ENCODE measurements at regions of chr1 and their contacts with region 1.

Region 1: GRCh38 chr1:207499573-207499972 is 3.6 kb downstream of the CR1 start:
- DNase-seq: peak; percentile 87
- ATAC-seq: peak; percentile 60
- H3K4me3 ChIP-seq: no peak overlapping the region
- H3K4me3 Mint-ChIP-seq: no peak overlapping the region
- H3K27ac ChIP-seq: no peak overlapping the region
- H3K27ac Mint-ChIP-seq: peak overlapping the region; percentile 60
- H3K4me1 ChIP-seq: peaks cover 26 to 31% of the 10 kb centered on the region in 2 donors
- H3K4me1 Mint-ChIP-seq: peaks cover 42% of the 10 kb centered on the region
- H3K27me3 ChIP-seq: no peaks in the 10 kb centered on the region
- H3K27me3 Mint-ChIP-seq: no peaks in the 10 kb centered on the region
- CTCF ChIP-seq: peak; percentile 96

Region 2: GRCh38 chr1:206925106-206925736 is 574.4 kb before region 1 on chr1:
- CTCF ChIA-PET with region 1: interaction called, 4 read pairs
- POLR2A ChIA-PET with region 1: no interaction called
- intact Hi-C with region 1: loop called (anchors 5 kb)
- DNase-seq: peak; percentile 84
- ATAC-seq: peak; percentile 53
- H3K4me3 ChIP-seq: peak overlapping the region in 1 of 5 experiments; percentile 17
- H3K4me3 Mint-ChIP-seq: no peak overlapping the region
- H3K27ac ChIP-seq: peak overlapping the region; percentile 88 to 96
- H3K27ac Mint-ChIP-seq: no peak overlapping the region
- H3K4me1 ChIP-seq: peaks cover 82 to 84% of the 10 kb centered on the region in 2 donors
- H3K4me1 Mint-ChIP-seq: peaks cover 37% of the 10 kb centered on the region
- H3K27me3 ChIP-seq: no peaks in the 10 kb centered on the region
- H3K27me3 Mint-ChIP-seq: no peaks in the 10 kb centered on the region
- CTCF ChIP-seq: peak; percentile 19

Region 3: DNA sequence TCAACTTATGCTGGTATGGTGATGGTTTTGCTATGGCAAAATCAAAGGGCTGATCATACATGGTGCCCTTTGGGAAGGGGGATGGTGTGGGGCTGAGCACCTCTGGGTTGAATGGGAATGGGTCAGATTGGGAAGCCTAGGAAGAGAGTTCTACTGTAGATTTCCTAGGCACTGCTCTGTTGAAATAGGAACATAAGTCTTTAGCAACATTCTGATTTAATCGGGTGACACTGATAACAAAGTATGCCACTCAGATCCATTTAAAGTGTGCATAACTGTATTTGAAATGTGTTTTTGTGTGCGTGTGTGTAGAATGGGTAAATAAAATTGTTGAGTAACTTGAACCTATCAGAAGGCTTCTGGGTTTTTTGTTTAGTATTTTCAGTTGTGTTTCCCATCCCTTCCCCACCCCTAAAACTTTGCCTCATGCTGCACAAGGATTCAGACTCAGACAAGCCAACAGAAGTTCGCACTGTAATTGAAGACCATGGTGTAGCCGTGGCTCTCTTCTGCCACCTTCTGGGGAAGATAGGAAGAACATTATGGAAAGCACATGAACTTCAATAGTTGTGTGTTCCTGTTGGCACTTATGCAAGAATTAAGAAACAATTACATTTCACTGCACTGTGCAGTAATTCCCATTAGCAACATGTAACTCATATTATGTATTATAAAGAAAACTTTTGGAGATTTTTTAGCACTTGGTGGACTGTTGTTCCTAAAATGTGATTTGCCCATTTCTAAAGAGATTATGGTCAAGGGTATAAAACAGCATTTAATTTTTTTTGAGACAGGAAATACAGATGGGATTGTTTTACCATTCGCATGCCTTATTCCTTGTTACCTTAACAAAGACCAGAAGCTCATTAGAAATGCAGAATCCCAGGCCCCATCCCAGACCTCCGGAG is 421.8 kb before region 1 on chr1:
- CTCF ChIA-PET with region 1: interaction called, 209 read pairs
- POLR2A ChIA-PET with region 1: no interaction called
- intact Hi-C with region 1: loop called (anchors 1 kb)
- DNase-seq: peak; percentile 83
- ATAC-seq: peak; percentile 95
- H3K4me3 ChIP-seq: no peak overlapping the region
- H3K4me3 Mint-ChIP-seq: no peak overlapping the region
- H3K27ac ChIP-seq: no peak overlapping the region
- H3K27ac Mint-ChIP-seq: no peak overlapping the region
- H3K4me1 ChIP-seq: no peaks in the 10 kb centered on the region
- H3K4me1 Mint-ChIP-seq: peaks cover 1% of the 10 kb centered on the region
- H3K27me3 ChIP-seq: no peaks in the 10 kb centered on the region
- H3K27me3 Mint-ChIP-seq: no peaks in the 10 kb centered on the region
- CTCF ChIP-seq: peak; percentile 96

Region 4: GRCh38 chr1:207321079-207321789 is 178.3 kb before region 1 on chr1 and contains the start of gene CD55:
- CTCF ChIA-PET with region 1: interaction called, 18 read pairs
- POLR2A ChIA-PET with region 1: interaction called, 8 read pairs
- intact Hi-C with region 1: loop called (anchors 5 kb)
- DNase-seq: peak; percentile 100
- ATAC-seq: peak; percentile 86
- H3K4me3 ChIP-seq: peak within 1 kb of the TSS; percentile 83 to 100 (median 91)
- H3K4me3 Mint-ChIP-seq: peak within 1 kb of the TSS; percentile 98
- H3K27ac ChIP-seq: peak within 1 kb of the TSS; percentile 98
- H3K27ac Mint-ChIP-seq: peak within 1 kb of the TSS; percentile 100
- H3K4me1 ChIP-seq: peaks cover 38 to 43% of the 10 kb centered on the region in 2 donors
- H3K4me1 Mint-ChIP-seq: peaks cover 56% of the 10 kb centered on the region
- H3K27me3 ChIP-seq: no peaks in the 10 kb centered on the region
- H3K27me3 Mint-ChIP-seq: no peaks in the 10 kb centered on the region
- CTCF ChIP-seq: peak; percentile 43
- total RNA-seq, gene CD55: 239 and 252 TPM in 2 replicates

Region 5: GRCh38 chr1:207393610-207394009 is 106.0 kb before region 1 on chr1:
- CTCF ChIA-PET with region 1: no interaction called
- POLR2A ChIA-PET with region 1: no interaction called
- intact Hi-C with region 1: no loop called
- DNase-seq: no peak
- ATAC-seq: no peak
- H3K4me3 ChIP-seq: no peak overlapping the region
- H3K4me3 Mint-ChIP-seq: no peak overlapping the region
- H3K27ac ChIP-seq: no peak overlapping the region
- H3K27ac Mint-ChIP-seq: no peak overlapping the region
- H3K4me1 ChIP-seq: no peaks in the 10 kb centered on the region
- H3K4me1 Mint-ChIP-seq: peaks cover 7% of the 10 kb centered on the region
- H3K27me3 ChIP-seq: no peaks in the 10 kb centered on the region
- H3K27me3 Mint-ChIP-seq: no peaks in the 10 kb centered on the region
- CTCF ChIP-seq: no peak

Region 6: GRCh38 chr1:207414606-207415108 is 84.9 kb before region 1 on chr1:
- CTCF ChIA-PET with region 1: interaction called, 31 read pairs
- POLR2A ChIA-PET with region 1: interaction called, 6 read pairs
- intact Hi-C with region 1: loop called (anchors 2 kb)
- DNase-seq: peak; percentile 84
- ATAC-seq: peak; percentile 90
- H3K4me3 ChIP-seq: peak overlapping the region in 4 of 5 experiments; percentile 28 to 39 (median 34)
- H3K4me3 Mint-ChIP-seq: peak overlapping the region; percentile 75
- H3K27ac ChIP-seq: peak overlapping the region; percentile 67 to 93
- H3K27ac Mint-ChIP-seq: peak overlapping the region; percentile 80
- H3K4me1 ChIP-seq: peaks cover 80 to 83% of the 10 kb centered on the region in 2 donors
- H3K4me1 Mint-ChIP-seq: peaks cover 77% of the 10 kb centered on the region
- H3K27me3 ChIP-seq: no peaks in the 10 kb centered on the region
- H3K27me3 Mint-ChIP-seq: no peaks in the 10 kb centered on the region
- CTCF ChIP-seq: no peak

Region 7: DNA sequence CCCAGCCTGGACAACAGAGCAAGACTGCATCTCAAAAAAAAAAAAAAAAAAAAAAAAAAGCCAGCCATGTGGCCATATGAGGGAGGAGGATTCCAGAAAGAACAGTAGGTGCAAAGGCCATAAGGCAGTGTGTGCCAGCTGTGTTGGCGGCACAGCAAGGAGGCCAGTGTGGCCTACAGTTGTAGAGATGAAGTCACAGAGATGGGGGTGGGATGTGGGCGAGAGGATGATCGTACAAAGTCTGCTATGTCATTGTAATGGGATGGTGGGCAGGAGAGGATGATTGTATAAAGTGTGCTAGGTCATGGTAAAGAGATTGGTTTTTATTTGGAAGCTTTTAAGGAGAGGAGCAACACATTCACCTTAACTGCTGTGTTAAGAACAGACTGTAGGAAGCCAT is 13.4 kb before region 1 on chr1:
- CTCF ChIA-PET with region 1: interaction called, 12 read pairs
- POLR2A ChIA-PET with region 1: no interaction called
- intact Hi-C with region 1: no loop called
- DNase-seq: no peak
- ATAC-seq: no peak
- H3K4me3 ChIP-seq: no peak overlapping the region
- H3K4me3 Mint-ChIP-seq: no peak overlapping the region
- H3K27ac ChIP-seq: peak overlapping the region in 1 of 2 donors; percentile 56
- H3K27ac Mint-ChIP-seq: peak overlapping the region; percentile 33
- H3K4me1 ChIP-seq: no peaks in the 10 kb centered on the region
- H3K4me1 Mint-ChIP-seq: no peaks in the 10 kb centered on the region
- H3K27me3 ChIP-seq: no peaks in the 10 kb centered on the region
- H3K27me3 Mint-ChIP-seq: no peaks in the 10 kb centered on the region
- CTCF ChIP-seq: no peak

Region 8: GRCh38 chr1:207654320-207654719 is 154.7 kb after region 1 on chr1:
- CTCF ChIA-PET with region 1: no interaction called
- POLR2A ChIA-PET with region 1: no interaction called
- intact Hi-C with region 1: no loop called
- DNase-seq: no peak
- ATAC-seq: no peak
- H3K4me3 ChIP-seq: no peak overlapping the region
- H3K4me3 Mint-ChIP-seq: no peak overlapping the region
- H3K27ac ChIP-seq: no peak overlapping the region
- H3K27ac Mint-ChIP-seq: no peak overlapping the region
- H3K4me1 ChIP-seq: no peaks in the 10 kb centered on the region
- H3K4me1 Mint-ChIP-seq: no peaks in the 10 kb centered on the region
- H3K27me3 ChIP-seq: no peaks in the 10 kb centered on the region
- H3K27me3 Mint-ChIP-seq: no peaks in the 10 kb centered on the region
- CTCF ChIP-seq: no peak